B cell (primary cell): ENCODE measurements at regions of chr17 and their contacts with region 1.

Region 1: GRCh38 chr17:61981323-61981722 is 53.5 kb upstream of the INTS2 start:
- DNase-seq: no peak
- ATAC-seq: no peak
- H3K4me3 ChIP-seq: no peak overlapping the region
- H3K4me3 Mint-ChIP-seq: no peak overlapping the region
- H3K27ac ChIP-seq: no peak overlapping the region
- H3K27ac Mint-ChIP-seq: no peak overlapping the region
- H3K4me1 ChIP-seq: no peaks in the 10 kb centered on the region
- H3K4me1 Mint-ChIP-seq: peaks cover 2% of the 10 kb centered on the region
- H3K27me3 ChIP-seq: no peaks in the 10 kb centered on the region
- H3K27me3 Mint-ChIP-seq: no peaks in the 10 kb centered on the region
- CTCF ChIP-seq: no peak

Region 2: GRCh38 chr17:62030209-62030608 is 48.9 kb after region 1 on chr17:
- CTCF ChIA-PET with region 1: no interaction called
- POLR2A ChIA-PET with region 1: no interaction called
- intact Hi-C with region 1: loop called (anchors 10 kb)
- DNase-seq: no peak
- ATAC-seq: no peak
- H3K4me3 ChIP-seq: no peak overlapping the region
- H3K4me3 Mint-ChIP-seq: no peak overlapping the region
- H3K27ac ChIP-seq: no peak overlapping the region
- H3K27ac Mint-ChIP-seq: no peak overlapping the region
- H3K4me1 ChIP-seq: no peaks in the 10 kb centered on the region
- H3K4me1 Mint-ChIP-seq: peaks cover 12% of the 10 kb centered on the region
- H3K27me3 ChIP-seq: no peaks in the 10 kb centered on the region
- H3K27me3 Mint-ChIP-seq: no peaks in the 10 kb centered on the region
- CTCF ChIP-seq: no peak